ENCODE measurements at regions of chr11 and their contacts with region 1.

Region 1: GRCh38 chr11:61967116-61967923 is at the start of gene FTH1:
- DNase-seq: peak; percentile 96
- ATAC-seq: peak; percentile 71
- H3K4me3 Mint-ChIP-seq: peak within 1 kb of the TSS; percentile 93
- H3K27ac Mint-ChIP-seq: peak within 1 kb of the TSS; percentile 94
- H3K4me1 Mint-ChIP-seq: peaks cover 47% of the 10 kb centered on the region
- H3K27me3 Mint-ChIP-seq: no peaks in the 10 kb centered on the region
- total RNA-seq, gene FTH1: 793 to 808 TPM

Region 2: DNA sequence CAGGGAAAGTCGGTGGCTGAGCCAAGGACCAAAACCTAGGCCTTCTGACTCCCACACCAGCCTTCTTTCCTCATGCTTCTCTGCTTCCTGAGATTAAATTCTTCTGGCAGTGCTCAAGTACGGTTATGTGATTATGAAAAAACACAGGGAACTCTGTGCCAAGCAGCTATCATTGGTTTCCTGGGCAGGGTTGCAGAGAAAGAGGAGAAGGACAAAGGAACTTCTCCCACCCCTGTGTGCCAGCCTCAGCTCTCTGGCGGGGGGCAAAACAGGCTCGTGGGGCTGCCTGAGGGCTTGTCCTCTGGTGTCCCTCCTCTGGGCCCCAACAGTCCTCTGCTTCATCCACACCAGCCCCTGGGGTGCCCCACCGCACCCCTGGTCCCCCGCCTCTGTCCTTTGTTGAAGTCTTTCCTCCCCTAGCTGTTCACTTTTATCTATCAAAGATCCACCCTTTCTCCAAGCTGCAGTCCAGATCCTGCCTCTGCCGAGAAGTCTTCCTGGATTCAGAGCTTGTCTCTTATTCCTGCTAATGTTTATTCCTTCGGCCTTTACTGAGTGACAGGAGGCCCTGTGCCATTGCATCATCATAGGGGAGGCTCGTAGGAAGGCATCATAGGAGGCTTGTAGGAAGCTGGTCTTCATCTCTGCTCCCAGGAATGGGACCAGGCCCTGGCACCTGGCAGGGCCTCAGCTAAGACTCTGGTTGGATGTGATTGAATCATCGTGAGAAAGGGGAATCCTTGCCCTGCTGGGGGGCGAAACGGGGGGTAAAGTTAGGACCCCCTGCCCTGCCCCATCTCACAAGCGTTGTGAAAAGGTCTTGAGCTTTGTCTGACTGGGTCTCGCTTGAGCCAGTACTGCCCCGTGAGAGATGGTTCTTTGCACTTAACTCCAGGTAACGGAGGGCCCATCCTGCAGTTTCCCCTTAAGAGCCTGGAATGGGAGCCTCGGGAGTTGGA is 11.7 kb after region 1 on chr11:
- POLR2A ChIA-PET with region 1: interaction called, 10 read pairs
- DNase-seq: peak; percentile 19
- ATAC-seq: no peak
- H3K4me3 Mint-ChIP-seq: no peak overlapping the region
- H3K27ac Mint-ChIP-seq: no peak overlapping the region
- H3K4me1 Mint-ChIP-seq: peaks cover 7% of the 10 kb centered on the region
- H3K27me3 Mint-ChIP-seq: no peaks in the 10 kb centered on the region

Region 3: GRCh38 chr11:62025487-62026105 is 58.3 kb after region 1 on chr11:
- POLR2A ChIA-PET with region 1: interaction called, 28 read pairs
- DNase-seq: peak; percentile 59
- ATAC-seq: peak; percentile 87
- H3K4me3 Mint-ChIP-seq: peak overlapping the region; percentile 71
- H3K27ac Mint-ChIP-seq: peak overlapping the region; percentile 97
- H3K4me1 Mint-ChIP-seq: peaks cover 12% of the 10 kb centered on the region
- H3K27me3 Mint-ChIP-seq: peaks cover 2% of the 10 kb centered on the region

Region 4: GRCh38 chr11:62069986-62070919 is 102.9 kb after region 1 on chr11:
- POLR2A ChIA-PET with region 1: no interaction called
- DNase-seq: no peak
- ATAC-seq: no peak
- H3K4me3 Mint-ChIP-seq: no peak overlapping the region
- H3K27ac Mint-ChIP-seq: no peak overlapping the region
- H3K4me1 Mint-ChIP-seq: no peaks in the 10 kb centered on the region
- H3K27me3 Mint-ChIP-seq: peaks cover 13% of the 10 kb centered on the region

Region 5: DNA sequence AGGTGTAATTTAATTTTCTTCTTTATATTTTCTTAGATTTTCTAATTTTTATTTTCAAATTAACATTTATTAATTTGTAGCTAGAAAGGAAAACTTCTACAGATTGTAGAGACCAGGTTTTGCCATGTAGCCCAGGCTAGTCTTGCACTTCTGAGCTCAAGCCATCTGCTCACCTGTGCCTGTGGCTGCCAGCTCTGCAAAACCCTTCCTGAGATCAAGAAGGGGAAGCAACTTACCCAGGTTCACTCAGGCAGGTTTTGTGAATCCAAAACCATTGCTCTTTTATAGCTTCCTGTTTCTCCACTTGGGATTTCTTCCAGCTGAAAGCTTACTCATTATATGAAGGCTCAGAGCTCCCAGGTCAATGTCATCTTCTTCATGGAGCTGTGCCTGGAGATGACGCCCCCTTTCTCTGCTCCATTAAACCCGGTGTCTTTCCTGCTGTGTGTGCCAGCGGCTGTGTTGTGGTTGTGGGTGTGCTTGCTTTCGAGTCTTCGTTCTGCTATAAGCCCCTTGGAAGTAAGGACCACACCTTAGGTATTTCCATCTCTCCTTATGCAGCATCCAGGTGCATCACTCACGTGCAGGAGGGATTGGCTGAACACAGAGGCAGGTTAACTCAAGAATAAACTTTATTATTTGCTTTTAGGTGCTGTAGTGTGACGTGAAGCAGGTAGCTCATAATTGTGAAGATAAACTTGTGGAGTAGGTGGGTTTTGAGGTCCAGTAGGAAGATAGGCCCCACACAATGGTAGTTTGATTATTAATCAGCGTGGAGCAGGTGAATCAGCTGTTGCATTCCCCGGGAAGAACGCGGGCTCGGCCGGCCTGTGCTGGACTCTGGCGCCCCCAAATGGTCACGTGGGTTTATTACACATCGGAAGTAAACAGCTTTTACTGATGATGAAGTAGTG is 114.3 kb after region 1 on chr11:
- POLR2A ChIA-PET with region 1: interaction called, 25 read pairs
- DNase-seq: peak; percentile 79
- ATAC-seq: peak; percentile 52
- H3K4me3 Mint-ChIP-seq: peak overlapping the region; percentile 43
- H3K27ac Mint-ChIP-seq: no peak overlapping the region
- H3K4me1 Mint-ChIP-seq: peaks cover 7% of the 10 kb centered on the region
- H3K27me3 Mint-ChIP-seq: peaks cover 4% of the 10 kb centered on the region